Activated CD4-positive, alpha-beta T cell treated with anti-CD3 and anti-CD28 coated beads, Interleukin-2, amount 10 ng/mL, durations not matched to agents 24 days and 14 days (primary cell): ENCODE measurements at regions of chr13 and their contacts with region 1.

Region 1: DNA sequence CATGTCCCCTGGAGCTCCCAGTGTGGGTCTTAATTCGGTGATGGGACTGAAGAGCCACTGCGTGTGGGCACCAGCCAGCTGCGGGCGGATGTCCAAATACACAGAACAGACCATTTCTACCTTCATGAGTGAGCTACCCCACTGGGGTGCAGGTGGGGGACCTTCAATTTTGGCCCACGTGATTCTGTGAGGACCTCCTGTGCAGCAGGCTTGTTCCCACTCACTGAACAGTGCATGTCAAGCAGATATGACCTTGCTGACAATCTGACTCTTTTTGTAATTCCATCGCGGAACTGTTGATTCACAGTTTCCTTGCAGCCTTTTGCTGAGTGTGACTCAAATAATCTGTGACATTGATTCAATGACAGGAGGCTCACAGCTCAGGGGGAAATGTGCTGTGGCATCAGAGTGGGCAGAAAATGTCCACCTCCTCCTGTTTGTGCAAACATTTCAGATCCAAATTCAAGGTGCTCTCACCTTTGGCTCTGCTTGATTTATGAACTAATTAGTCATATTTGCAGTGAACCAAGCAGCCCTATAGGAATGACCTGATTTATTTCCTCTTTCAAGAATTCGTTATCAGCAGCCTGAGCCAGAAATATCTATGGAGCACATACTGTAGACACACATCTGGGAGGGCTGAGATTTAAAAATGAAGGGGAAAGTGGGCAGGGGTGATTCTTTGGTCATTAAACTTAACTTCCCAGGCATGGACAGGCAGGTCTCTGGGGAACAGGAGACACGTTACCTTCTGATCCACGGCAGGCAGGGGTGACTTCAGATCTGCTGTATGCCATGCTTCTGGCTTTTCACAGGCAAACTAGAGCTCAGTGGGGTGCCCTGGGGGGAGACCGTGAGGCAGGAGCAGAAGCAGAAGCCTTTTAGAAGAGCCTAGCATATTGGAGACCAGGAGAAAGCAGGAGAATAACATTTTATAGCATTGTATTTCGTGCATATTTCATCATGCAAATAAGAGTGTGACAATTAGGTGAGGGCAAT is 170.0 kb upstream of the KL start:
- DNase-seq: no peak
- H3K4me3 Mint-ChIP-seq: no peak overlapping the region
- H3K27ac Mint-ChIP-seq: peak overlapping the region; percentile 14
- H3K4me1 Mint-ChIP-seq: peaks cover 6% of the 10 kb centered on the region
- H3K27me3 Mint-ChIP-seq: peaks cover 2% of the 10 kb centered on the region

Region 2: DNA sequence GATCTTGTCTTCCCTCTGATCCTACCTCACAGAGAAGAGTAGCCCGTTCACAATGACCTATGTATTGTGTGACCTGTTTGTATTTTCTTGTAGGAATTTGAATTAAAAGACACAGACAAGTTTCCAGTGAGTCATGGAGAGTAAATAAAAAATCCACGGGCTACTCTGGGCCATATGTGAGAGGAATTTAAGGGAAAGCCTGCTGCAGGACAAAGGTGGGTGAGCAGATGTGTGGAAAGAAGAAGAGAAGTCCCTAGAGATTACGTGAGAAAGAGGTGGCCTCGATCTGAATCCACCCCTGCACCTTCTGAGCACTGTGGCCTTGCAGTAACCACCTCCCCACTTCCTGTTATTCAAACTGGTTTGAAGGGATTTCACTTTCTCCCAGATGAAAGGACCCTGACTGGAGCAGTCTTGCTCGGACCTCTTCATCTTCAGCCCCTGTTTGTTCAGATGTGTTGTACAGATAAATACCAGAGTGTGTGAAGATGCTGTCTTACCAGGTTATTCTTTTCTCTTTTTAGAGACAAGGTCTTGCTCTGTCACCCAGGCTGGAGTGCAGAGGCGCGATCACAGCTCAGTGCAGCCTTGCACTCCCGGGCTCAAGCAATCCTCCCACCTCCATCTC is 54.6 kb before region 1 on chr13:
- intact Hi-C with region 1: loop called (anchors 5 kb)
- DNase-seq: peak; percentile 87
- H3K4me3 Mint-ChIP-seq: peak overlapping the region; percentile 54
- H3K27ac Mint-ChIP-seq: peak overlapping the region; percentile 46
- H3K4me1 Mint-ChIP-seq: peaks cover 43% of the 10 kb centered on the region
- H3K27me3 Mint-ChIP-seq: no peaks in the 10 kb centered on the region